ENCODE measurements at regions of chr9 and their contacts with region 1.

Region 1: DNA sequence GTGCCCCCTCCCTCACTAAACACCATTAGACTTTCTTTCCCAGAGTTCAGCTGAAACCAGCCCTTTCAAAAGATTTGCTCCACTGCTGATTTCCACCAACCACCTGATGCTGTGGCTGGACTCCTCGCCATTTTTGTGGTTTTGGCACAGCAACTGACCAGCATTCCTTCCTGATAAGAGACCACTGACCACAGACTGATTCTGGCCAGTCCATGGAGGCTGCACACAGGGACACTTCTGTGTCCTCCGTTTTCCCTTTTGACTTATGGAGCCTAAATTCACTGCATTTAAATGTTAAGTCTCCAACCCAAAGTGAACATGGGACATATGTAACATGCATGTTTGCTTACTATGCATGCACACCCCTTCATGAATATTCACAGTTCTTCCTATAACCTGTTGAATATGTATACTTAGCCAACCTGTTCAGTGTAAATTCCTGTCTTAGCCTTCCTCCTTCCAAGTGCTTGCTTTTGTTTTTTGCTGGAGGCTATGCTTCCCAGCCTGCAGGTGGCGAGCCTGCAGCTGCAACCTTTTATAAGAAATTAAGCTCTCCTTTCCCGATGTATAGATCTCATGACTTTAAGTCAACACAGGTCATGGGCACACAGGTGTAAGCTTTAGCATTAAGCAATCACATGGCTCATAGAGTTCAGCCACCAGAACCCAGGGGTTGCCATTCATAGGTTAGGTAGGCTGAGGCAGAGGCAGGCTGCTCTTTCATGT is 78.7 kb downstream of the ACTL7B start:
- H3K4me3 ChIP-seq: no peak overlapping the region
- H3K27ac ChIP-seq: no peak overlapping the region
- H3K4me1 ChIP-seq: no peaks in the 10 kb centered on the region
- CTCF ChIP-seq: no peak

Region 2: DNA sequence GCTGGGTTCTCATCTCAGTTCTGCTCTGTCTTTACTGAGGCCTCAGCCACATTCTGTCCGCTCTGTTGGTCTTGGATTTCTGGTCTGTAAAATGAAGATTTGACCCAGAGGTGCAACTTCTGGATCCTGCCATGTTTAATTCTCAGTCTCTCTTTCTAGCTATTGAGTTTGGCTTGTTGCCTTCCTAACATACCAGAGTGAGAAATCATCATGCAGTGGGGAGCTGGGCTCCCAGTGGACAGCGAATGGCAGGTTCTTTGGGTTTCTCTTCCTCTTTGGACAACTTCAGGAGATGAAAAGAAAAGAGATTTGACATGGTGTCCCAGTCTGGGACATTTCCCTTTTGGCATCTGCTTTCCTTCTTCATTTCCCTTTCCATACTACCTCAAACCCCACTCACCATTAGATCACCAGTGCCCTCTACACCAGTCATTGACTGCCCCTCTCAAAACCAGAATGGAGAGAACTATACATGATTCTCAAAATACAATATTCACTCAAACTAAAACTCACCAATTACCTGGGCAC is 256.0 kb before region 1 on chr9:
- CTCF ChIA-PET with region 1: no interaction called
- POLR2A ChIA-PET with region 1: no interaction called
- H3K4me3 ChIP-seq: no peak overlapping the region
- H3K27ac ChIP-seq: no peak overlapping the region
- H3K4me1 ChIP-seq: no peaks in the 10 kb centered on the region
- CTCF ChIP-seq: no peak

Region 3: DNA sequence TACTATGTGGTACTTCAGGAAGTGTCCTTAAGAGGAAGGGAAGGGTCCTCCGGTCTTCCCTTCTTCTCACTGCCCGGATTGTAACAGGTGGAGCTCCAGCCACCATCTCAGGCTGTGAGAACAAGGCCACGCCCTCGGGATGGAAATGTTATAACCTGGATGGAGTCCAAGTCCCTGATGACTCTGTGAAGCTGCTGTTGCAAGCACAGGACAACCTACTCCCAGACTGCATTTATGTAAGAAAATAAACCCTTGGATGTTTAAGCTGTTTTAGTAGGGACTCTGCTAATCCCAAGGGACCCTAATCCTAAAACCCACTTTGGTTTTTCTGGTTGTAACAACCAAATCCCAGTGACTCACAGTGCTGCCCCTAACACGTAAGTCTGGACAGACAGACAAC is 142.9 kb before region 1 on chr9:
- CTCF ChIA-PET with region 1: no interaction called
- POLR2A ChIA-PET with region 1: no interaction called
- H3K4me3 ChIP-seq: no peak overlapping the region
- H3K27ac ChIP-seq: no peak overlapping the region
- H3K4me1 ChIP-seq: no peaks in the 10 kb centered on the region
- CTCF ChIP-seq: no peak

Region 4: DNA sequence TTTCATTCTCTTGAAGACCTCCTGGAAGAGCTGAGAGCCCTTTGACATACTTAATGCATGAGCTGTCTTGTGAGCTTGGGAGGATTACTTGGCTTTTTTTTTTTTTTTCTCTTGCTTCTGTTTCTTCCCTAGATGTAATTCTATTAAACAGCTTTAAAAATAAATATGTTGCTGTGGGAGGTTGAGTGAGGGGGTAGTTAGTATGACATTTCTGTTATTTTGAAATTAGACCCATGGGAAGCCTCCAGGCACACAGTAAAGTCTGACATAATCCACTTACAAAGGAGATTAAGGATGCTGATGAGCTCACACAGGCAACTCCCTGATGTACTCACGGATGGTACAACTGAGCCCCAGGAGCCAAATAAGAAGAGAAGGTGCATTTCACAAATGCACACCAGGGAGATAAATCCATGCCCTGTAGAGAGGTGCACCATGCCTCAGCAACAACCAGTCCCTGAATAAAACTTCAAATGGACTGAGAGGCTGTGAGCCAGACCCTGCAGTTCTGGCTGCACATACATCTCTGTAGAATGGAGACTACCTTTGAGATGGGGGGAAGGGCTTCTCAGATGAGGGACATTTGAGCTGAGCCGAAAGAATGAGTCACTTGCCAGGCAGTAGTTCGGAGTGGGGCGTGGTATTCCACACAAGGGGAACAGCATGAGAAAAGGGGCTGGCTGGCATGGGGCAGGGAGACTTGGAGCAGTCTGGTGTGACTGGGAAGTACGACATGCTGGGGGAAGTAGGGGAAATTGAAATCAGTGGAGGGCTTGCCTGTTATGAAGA is 10.0 kb after region 1 on chr9:
- CTCF ChIA-PET with region 1: interaction called, 10 read pairs
- POLR2A ChIA-PET with region 1: no interaction called
- H3K4me3 ChIP-seq: no peak overlapping the region; the same call in 1 of the 2 replicates
- H3K27ac ChIP-seq: peak overlapping the region; percentile 70
- H3K4me1 ChIP-seq: peaks cover 9% of the 10 kb centered on the region; the same call in 1 of the 2 replicates
- CTCF ChIP-seq: no peak